T-cell (primary cell): ENCODE measurements at regions of chr20 and their contacts with region 1.

Region 1: DNA sequence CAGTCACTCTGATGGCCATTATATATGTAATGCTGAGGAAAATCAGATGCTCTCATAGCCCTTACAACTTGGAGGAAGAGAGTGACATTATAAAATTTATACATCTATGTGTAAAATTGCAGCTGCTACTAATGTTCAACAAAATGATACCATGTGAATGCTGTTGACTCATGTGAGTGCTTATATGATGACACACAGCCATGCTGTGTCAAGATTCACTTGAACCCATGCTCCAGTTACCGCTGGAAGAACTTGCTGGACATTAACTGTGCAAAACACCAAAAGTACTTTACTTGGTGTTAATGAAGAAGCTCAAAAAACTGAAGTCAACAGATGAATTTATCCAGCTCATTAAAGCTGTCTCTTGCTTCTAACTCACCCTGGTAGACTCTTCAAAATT is 318.9 kb upstream of the PLCB4 start:
- DNase-seq: no peak
- ATAC-seq: no peak
- H3K4me3 ChIP-seq: no peak overlapping the region
- H3K4me3 Mint-ChIP-seq: no peak overlapping the region
- H3K27ac ChIP-seq: no peak overlapping the region
- H3K27ac Mint-ChIP-seq: no peak overlapping the region
- H3K4me1 ChIP-seq: no peaks in the 10 kb centered on the region
- H3K4me1 Mint-ChIP-seq: no peaks in the 10 kb centered on the region
- H3K27me3 ChIP-seq: no peaks in the 10 kb centered on the region
- H3K27me3 Mint-ChIP-seq: no peaks in the 10 kb centered on the region

Region 2: DNA sequence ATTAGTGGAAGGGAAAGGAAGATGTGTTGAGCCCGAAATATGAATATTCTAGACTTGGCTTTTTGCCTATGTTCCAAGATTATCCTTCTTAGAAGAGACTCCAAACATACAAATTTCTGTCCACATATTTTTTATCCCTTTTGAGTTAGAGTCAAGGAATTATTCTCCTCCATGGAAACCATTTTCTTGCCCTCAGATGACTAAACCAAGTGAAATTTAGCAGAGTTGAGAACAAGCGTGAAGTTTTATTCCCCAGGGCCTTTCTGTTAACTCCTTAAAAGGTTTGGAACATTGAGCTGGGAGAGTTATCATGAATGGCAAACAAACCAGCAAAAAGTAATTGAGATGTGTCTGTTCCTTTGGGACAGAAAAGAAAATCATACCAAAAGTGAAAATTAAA is 32.8 kb after region 1 on chr20:
- CTCF ChIA-PET with region 1: interaction called in 1 of 2 experiments, 10 read pairs
- POLR2A ChIA-PET with region 1: no interaction called
- DNase-seq: no peak
- ATAC-seq: no peak
- H3K4me3 ChIP-seq: no peak overlapping the region
- H3K4me3 Mint-ChIP-seq: no peak overlapping the region
- H3K27ac ChIP-seq: no peak overlapping the region
- H3K27ac Mint-ChIP-seq: no peak overlapping the region
- H3K4me1 ChIP-seq: no peaks in the 10 kb centered on the region
- H3K4me1 Mint-ChIP-seq: no peaks in the 10 kb centered on the region
- H3K27me3 ChIP-seq: no peaks in the 10 kb centered on the region
- H3K27me3 Mint-ChIP-seq: no peaks in the 10 kb centered on the region